ENCODE measurements at regions of chr1 and their contacts with region 1.

Region 1: GRCh38 chr1:225962440-225962975 is 21.5 kb upstream of the LEFTY2 start:
- DNase-seq: peak; percentile 72
- ATAC-seq: peak; percentile 92
- H3K4me3 Mint-ChIP-seq: no peak overlapping the region
- H3K27ac Mint-ChIP-seq: no peak overlapping the region
- H3K4me1 Mint-ChIP-seq: no peaks in the 10 kb centered on the region
- H3K27me3 Mint-ChIP-seq: peaks cover 11% of the 10 kb centered on the region

Region 2: GRCh38 chr1:225944951-225945350 is 17.6 kb before region 1 on chr1:
- CTCF ChIA-PET with region 1: interaction called, 11 read pairs
- DNase-seq: no peak
- ATAC-seq: peak; percentile 79
- H3K4me3 Mint-ChIP-seq: no peak overlapping the region
- H3K27ac Mint-ChIP-seq: peak overlapping the region; percentile 25
- H3K4me1 Mint-ChIP-seq: peaks cover 10% of the 10 kb centered on the region
- H3K27me3 Mint-ChIP-seq: peaks cover 9% of the 10 kb centered on the region